HCT116 (cell line): ENCODE measurements at regions of chr10 and their contacts with region 1.

Region 1: GRCh38 chr10:96043033-96043932 is at the start of gene CCNJ:
- DNase-seq: peak; percentile 77
- ATAC-seq: peak; percentile 92
- H3K4me3 ChIP-seq: peak within 1 kb of the TSS; percentile 70 to 78
- H3K27ac ChIP-seq: peak within 1 kb of the TSS; percentile 70
- H3K4me1 ChIP-seq: peaks cover 5 to 18% of the 10 kb centered on the region in 2 experiments
- H3K27me3 ChIP-seq: no peaks in the 10 kb centered on the region
- CTCF ChIP-seq: no peak
- POLR2A ChIP-seq: peak; percentile 80
- RAD21 ChIP-seq: no peak
- total RNA-seq, gene CCNJ: 12.2 TPM

Region 2: DNA sequence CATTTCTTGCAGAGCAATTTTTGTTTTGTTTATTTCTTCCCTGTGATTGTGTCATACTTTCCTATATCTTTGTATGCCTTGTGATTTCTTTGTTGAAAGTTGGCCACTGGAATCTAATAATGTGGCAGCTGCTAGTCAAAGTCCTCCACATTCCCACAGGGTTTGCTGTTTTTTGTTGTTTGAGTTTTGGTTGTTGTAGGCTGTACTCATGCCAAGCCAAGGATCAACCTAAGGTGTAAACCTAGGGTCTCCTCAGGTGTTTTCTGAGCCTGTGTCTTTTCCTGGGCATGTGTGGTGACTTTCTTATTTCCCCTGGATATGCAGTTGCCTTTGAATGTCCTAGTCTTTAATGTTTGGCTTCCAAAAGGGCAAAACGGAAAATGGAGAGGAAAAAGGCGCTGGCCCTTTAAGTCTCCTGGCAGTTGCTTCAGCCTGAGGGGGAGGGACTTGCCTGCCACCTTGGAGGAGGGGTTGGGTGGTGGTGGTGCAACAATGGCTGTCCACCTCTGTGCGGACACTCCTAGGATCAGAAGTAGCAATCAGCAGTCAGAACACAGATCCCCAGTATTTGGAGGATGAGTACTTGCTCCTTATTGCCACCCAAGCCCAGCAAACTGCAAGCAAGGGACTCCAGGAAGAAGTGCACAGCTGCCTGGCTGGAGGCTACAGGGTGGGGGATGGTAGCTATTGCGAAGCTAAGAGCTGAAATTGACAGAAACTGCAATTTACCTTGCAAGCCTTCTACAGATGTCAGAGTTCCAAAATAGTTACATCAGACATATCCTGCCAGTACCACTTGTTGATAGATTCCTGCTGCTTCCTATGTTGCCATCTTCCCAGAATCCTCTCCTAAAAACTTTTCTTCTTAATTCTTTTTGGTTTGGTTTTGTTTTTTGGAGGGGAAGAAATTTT is 81.2 kb after region 1 on chr10:
- CTCF ChIA-PET with region 1: interaction called, 4 read pairs
- POLR2A ChIA-PET with region 1: interaction called, 4 read pairs
- RAD21 ChIA-PET with region 1: no interaction called
- intact Hi-C with region 1: loop called (anchors 5 kb)
- DNase-seq: peak; percentile 67
- ATAC-seq: peak; percentile 88
- H3K4me3 ChIP-seq: peak overlapping the region; percentile 50 to 65
- H3K27ac ChIP-seq: peak overlapping the region; percentile 77
- H3K4me1 ChIP-seq: peaks cover 46 to 61% of the 10 kb centered on the region in 2 experiments
- H3K27me3 ChIP-seq: no peaks in the 10 kb centered on the region
- CTCF ChIP-seq: no peak
- POLR2A ChIP-seq: peak; percentile 62
- RAD21 ChIP-seq: no peak

Region 3: GRCh38 chr10:96260014-96260413 is 216.7 kb after region 1 on chr10:
- CTCF ChIA-PET with region 1: no interaction called
- POLR2A ChIA-PET with region 1: no interaction called
- RAD21 ChIA-PET with region 1: no interaction called
- intact Hi-C with region 1: no loop called
- DNase-seq: no peak
- ATAC-seq: no peak
- H3K4me3 ChIP-seq: no peak overlapping the region
- H3K27ac ChIP-seq: no peak overlapping the region
- H3K4me1 ChIP-seq: peaks cover 0 to 10% of the 10 kb centered on the region in 2 experiments; a peak in 2 of 4 replicates
- H3K27me3 ChIP-seq: no peaks in the 10 kb centered on the region
- CTCF ChIP-seq: no peak
- POLR2A ChIP-seq: no peak
- RAD21 ChIP-seq: no peak

Region 4: DNA sequence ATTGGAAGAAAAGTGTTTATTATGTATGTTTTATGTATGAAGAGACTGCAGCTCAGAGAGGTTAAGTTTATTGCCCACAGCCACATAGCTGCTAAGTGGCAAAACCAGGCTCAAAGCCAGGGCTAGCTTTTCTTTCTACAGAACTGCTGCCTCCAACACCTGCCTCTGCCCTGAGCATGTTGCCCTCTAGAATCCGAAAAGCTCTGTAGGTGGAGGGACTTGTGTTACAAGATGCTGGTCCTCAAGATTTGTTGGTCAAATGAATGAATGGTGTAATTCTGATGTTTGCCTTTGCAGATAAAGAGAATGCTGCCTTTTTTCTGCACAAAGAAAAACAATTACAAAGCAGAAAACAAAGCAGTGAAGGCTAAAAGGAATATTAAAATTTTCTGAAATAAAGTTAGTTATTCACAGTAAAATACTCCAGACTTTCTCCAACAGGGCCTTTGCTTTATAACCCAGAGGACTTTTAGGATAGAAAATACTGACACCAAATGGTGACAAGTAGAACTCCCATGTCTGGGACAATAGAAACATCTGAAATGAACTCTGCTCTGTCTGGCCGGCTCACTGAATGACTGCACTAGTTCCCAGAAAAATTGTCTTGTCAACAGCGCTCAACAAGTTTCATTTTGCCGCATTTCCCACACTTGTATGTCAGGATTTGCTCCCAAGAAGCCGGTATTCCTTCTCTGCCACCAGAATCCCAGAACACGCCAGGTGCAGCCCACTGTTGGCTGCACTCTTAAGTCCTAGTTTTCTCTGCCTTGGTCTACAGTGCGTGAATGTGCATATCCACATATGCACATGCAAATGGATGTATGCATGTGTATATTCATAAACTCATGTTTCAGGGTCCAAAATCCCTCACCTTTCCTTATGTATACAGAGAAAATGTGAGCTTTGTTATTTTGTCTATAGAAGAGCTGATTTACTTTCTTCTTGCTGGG is 250.0 kb after region 1 on chr10:
- CTCF ChIA-PET with region 1: no interaction called
- POLR2A ChIA-PET with region 1: no interaction called
- RAD21 ChIA-PET with region 1: no interaction called
- intact Hi-C with region 1: loop called (anchors 10 kb)
- DNase-seq: peak; percentile 47
- ATAC-seq: peak; percentile 95
- H3K4me3 ChIP-seq: no peak overlapping the region
- H3K27ac ChIP-seq: no peak overlapping the region
- H3K4me1 ChIP-seq: peaks cover 0 to under 1% of the 10 kb centered on the region in 2 experiments; a peak in 1 of 4 replicates
- H3K27me3 ChIP-seq: peaks cover 7% of the 10 kb centered on the region; the same call in 1 of the 2 replicates
- CTCF ChIP-seq: peak; percentile 50 to 92 (median 67)
- POLR2A ChIP-seq: no peak
- RAD21 ChIP-seq: peak; percentile 86